Activated CD8-positive, alpha-beta T cell treated with anti-CD3 and anti-CD28 coated beads for 36 hours (primary cell): ENCODE measurements at regions of chr7 and their contacts with region 1.

Region 1: GRCh38 chr7:73738612-73739374 is at the start of gene ABHD11:
- DNase-seq: peak; percentile 98
- ATAC-seq: peak; percentile 83
- H3K4me3 Mint-ChIP-seq: peak within 1 kb of the TSS; percentile 93
- H3K27ac Mint-ChIP-seq: peak within 1 kb of the TSS; percentile 95
- H3K4me1 Mint-ChIP-seq: peaks cover 4% of the 10 kb centered on the region
- H3K27me3 Mint-ChIP-seq: no peaks in the 10 kb centered on the region
- CTCF ChIP-seq: no peak
- total RNA-seq, gene ABHD11: 19.0 to 21.5 TPM

Region 2: DNA sequence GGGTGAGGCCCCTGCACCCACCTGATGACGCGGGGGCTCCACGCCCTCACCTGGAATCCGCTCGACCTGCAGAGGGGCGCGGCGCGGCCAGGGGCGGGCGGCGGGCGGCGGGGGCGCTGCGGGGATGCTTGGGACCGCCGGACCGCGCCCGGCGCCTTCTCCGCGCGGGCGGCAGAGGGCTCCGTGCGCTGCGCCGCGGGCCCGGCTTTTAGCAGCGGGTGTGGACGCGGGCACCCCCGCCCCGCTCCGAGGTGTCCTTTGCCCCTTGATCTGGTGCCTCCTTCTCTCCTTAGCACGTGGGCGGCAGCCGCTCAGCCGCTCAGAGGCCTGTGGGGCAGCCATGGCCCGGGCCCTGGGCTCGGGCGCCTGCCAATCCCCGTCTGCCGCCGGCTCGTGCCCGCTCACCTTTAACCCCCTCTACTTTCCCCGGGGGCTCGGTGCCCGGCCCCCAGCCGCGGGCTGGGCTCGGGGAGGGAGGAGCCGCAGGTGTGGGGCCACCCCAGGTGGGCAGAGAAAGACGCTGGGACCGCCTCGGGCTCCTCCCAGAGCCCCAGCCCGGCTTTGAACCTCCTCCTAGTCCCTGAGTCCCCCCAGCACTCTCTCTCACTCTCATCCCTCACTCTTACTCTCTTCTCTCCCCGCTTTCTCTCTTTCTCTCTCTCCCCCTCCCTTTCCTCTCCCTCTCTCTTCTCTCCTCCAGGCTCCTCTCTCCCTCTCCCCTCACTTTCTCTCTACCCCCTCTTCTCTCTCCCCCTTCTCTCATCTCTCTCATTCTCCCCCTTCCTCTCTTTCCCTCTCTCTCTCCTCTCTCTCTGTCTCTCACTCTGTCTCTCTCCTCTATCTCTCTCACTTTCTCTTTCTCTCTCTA is 90.8 kb before region 1 on chr7:
- CTCF ChIA-PET with region 1: interaction called, 10 read pairs
- POLR2A ChIA-PET with region 1: no interaction called
- intact Hi-C with region 1: no loop called
- DNase-seq: peak; percentile 62
- ATAC-seq: peak; percentile 83
- H3K4me3 Mint-ChIP-seq: peak overlapping the region; percentile 44
- H3K27ac Mint-ChIP-seq: no peak overlapping the region
- H3K4me1 Mint-ChIP-seq: peaks cover 7% of the 10 kb centered on the region
- H3K27me3 Mint-ChIP-seq: peaks cover 52% of the 10 kb centered on the region
- CTCF ChIP-seq: no peak

Region 3: GRCh38 chr7:73667344-73668102 is 71.3 kb before region 1 on chr7 and contains the start of gene VPS37D:
- CTCF ChIA-PET with region 1: interaction called, 11 read pairs
- POLR2A ChIA-PET with region 1: no interaction called
- intact Hi-C with region 1: no loop called
- DNase-seq: peak; percentile 92
- ATAC-seq: peak; percentile 95
- H3K4me3 Mint-ChIP-seq: peak within 1 kb of the TSS; percentile 67
- H3K27ac Mint-ChIP-seq: no peak within 1 kb of the TSS
- H3K4me1 Mint-ChIP-seq: peaks cover 11% of the 10 kb centered on the region
- H3K27me3 Mint-ChIP-seq: peaks cover 30% of the 10 kb centered on the region
- CTCF ChIP-seq: peak; percentile 66
- total RNA-seq, gene VPS37D: 0.87 to 1.1 TPM

Region 4: DNA sequence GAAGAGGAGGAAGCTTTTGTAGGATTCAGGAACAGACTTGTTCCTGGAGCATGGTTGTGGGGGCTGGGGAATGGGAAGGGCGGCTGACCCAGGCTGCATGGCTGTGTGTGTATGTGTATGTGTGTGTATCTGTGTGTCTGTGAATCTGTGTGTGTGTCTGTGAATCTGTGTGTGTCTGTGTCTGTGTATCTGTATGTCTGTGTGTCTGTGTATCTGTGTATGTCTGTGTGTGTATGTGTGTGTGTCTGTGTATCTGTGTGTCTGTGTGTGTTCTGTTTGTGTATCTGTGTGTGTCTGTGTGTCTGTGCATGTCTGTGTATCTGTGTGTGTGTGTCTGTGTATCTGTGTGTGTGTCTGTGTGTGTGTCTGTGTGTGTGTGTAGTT is 12.7 kb before region 1 on chr7:
- CTCF ChIA-PET with region 1: interaction called, 10 read pairs
- POLR2A ChIA-PET with region 1: interaction called, 4 read pairs
- intact Hi-C with region 1: no loop called
- DNase-seq: no peak
- ATAC-seq: peak; percentile 24
- H3K4me3 Mint-ChIP-seq: no peak overlapping the region
- H3K27ac Mint-ChIP-seq: no peak overlapping the region
- H3K4me1 Mint-ChIP-seq: no peaks in the 10 kb centered on the region
- H3K27me3 Mint-ChIP-seq: peaks cover 6% of the 10 kb centered on the region
- CTCF ChIP-seq: peak; percentile 46

Region 5: DNA sequence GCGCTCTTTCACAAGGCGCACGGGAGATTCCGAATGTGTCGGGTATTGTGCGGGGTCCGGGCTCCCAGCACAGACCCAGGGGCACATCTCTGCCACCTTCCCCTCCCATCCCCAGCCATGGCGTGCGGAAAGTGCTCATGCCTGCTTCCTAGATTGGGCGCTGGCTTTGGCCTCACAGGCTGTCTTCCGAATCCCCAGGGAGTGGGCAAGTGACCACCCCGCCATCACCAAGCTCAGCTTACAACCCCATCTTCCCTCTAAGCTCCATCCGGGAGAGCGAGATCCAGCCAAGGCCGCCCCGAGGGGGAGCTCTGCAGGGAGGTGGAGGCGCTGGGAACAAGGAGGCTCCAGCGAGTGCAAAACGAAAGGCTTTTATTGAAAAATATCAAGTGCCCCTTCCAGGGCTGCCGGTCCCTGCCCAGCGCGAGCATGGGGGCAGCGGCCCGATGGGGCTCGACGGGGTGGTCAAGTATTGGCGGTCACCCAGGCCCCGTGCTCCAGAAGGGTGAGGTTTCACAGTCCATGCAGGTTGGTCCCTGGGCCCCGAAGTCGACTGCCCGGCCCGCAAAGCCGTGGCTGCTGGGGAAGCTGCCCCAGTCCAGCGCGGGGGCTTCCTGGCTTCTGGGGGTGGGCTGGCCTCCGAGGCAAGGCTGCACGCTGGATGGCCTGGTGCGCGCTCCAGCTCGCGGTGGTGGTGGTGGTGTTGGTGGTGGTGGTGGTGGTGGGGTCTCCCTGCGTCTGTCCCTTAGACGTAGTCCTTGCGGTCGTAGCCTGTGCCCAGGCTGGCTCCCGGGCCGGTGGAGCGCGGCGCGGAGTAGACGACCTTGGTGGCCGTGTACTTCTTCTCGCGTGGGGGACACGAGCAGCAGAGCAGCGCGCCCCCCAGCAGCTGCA is 30.1 kb after region 1 on chr7:
- CTCF ChIA-PET with region 1: no interaction called
- POLR2A ChIA-PET with region 1: no interaction called
- intact Hi-C with region 1: no loop called
- DNase-seq: no peak
- ATAC-seq: no peak
- H3K4me3 Mint-ChIP-seq: no peak overlapping the region
- H3K27ac Mint-ChIP-seq: no peak overlapping the region
- H3K4me1 Mint-ChIP-seq: peaks cover 6% of the 10 kb centered on the region
- H3K27me3 Mint-ChIP-seq: peaks cover 36% of the 10 kb centered on the region
- CTCF ChIP-seq: no peak

Region 6: DNA sequence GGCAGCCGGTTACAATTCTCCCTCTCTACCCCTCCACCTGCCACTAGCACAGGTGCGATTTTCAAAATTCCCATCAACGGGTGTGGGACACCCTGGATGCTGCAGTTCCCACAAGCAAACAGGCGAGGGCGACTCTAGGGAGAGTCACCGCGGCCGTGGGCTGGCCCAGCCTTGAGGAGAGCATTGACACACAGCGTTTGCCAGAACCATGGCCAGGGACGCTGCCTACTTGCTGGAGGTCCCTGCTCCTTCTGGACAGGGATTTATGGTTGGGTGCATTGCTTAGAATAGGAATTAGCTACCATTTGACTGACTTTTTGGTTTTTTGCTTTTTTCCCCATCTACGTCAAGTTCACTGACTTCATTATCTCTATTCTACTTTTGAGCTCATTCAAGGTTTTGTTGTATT is 73.0 kb after region 1 on chr7:
- CTCF ChIA-PET with region 1: no interaction called
- POLR2A ChIA-PET with region 1: no interaction called
- intact Hi-C with region 1: no loop called
- DNase-seq: peak; percentile 69
- ATAC-seq: peak; percentile 95
- H3K4me3 Mint-ChIP-seq: no peak overlapping the region
- H3K27ac Mint-ChIP-seq: no peak overlapping the region
- H3K4me1 Mint-ChIP-seq: no peaks in the 10 kb centered on the region
- H3K27me3 Mint-ChIP-seq: peaks cover 6% of the 10 kb centered on the region
- CTCF ChIP-seq: peak; percentile 78

Region 7: DNA sequence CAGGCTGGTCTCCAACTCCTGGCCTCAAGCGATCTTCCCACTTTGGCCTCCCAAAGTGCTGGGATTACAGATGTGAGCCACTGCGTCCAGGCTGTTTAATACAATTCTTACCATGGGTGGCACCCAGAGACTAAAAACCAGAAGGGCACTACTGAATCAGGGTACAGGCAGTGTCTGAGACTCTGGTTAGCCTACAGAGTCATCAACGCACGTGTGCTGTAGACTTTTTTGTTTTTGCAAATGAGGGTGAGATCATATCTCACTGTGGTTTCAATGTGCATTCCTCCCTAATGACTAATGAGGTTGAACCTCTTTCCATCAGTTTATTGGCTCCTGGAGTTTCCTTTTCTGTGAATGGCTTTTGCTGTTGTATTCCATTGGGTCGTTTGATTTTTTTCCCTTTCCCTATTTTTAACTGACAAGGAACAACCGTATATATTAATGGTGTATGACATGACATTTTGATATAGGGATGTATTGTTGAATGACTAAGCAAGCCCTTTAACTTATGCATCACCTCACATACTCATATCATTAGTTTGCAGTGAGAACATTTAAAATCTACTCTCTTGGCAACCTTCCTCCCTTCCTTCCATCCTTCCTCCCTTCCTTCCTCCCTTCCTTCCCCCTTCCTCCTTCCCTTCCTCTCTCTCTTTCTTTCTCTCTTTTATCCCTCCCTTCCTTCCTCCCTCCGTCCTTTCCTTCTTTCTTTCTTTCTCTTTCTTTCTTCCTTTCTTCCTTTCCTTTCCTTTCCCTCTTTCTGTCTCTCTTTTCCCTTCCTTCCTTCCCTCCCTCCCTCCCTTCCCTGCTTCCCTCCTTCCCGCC is 112.8 kb after region 1 on chr7:
- CTCF ChIA-PET with region 1: interaction called, 12 read pairs
- POLR2A ChIA-PET with region 1: no interaction called
- intact Hi-C with region 1: no loop called
- DNase-seq: peak; percentile 62
- ATAC-seq: peak; percentile 93
- H3K4me3 Mint-ChIP-seq: no peak overlapping the region
- H3K27ac Mint-ChIP-seq: peak overlapping the region; percentile 25
- H3K4me1 Mint-ChIP-seq: peaks cover 23% of the 10 kb centered on the region
- H3K27me3 Mint-ChIP-seq: peaks cover 9% of the 10 kb centered on the region
- CTCF ChIP-seq: no peak